ENCODE measurements at regions of chr3 and their contacts with region 1.

Region 1: GRCh38 chr3:188061133-188061532 is 92.8 kb upstream of the LPP start:
- DNase-seq: peak; percentile 85
- H3K4me3 Mint-ChIP-seq: peak overlapping the region; percentile 66
- H3K27ac Mint-ChIP-seq: peak overlapping the region; percentile 88
- H3K4me1 Mint-ChIP-seq: peaks cover 32% of the 10 kb centered on the region
- H3K27me3 Mint-ChIP-seq: no peaks in the 10 kb centered on the region

Region 2: GRCh38 chr3:186760141-186760813 is 1300.9 kb before region 1 on chr3:
- intact Hi-C with region 1: no loop called
- DNase-seq: no peak
- H3K4me3 Mint-ChIP-seq: no peak overlapping the region
- H3K27ac Mint-ChIP-seq: no peak overlapping the region
- H3K4me1 Mint-ChIP-seq: peaks cover 3% of the 10 kb centered on the region
- H3K27me3 Mint-ChIP-seq: peaks cover 3% of the 10 kb centered on the region

Region 3: GRCh38 chr3:187994221-187995042 is 66.7 kb before region 1 on chr3:
- intact Hi-C with region 1: loop called (anchors 1 kb)
- DNase-seq: peak; percentile 75
- H3K4me3 Mint-ChIP-seq: peak overlapping the region; percentile 47
- H3K27ac Mint-ChIP-seq: peak overlapping the region; percentile 76
- H3K4me1 Mint-ChIP-seq: peaks cover 71% of the 10 kb centered on the region
- H3K27me3 Mint-ChIP-seq: no peaks in the 10 kb centered on the region

Region 4: GRCh38 chr3:188123170-188123905 is 62.2 kb after region 1 on chr3:
- intact Hi-C with region 1: loop called (anchors 1 kb)
- DNase-seq: no peak
- H3K4me3 Mint-ChIP-seq: no peak overlapping the region
- H3K27ac Mint-ChIP-seq: peak overlapping the region; percentile 45
- H3K4me1 Mint-ChIP-seq: peaks cover 17% of the 10 kb centered on the region
- H3K27me3 Mint-ChIP-seq: peaks cover 5% of the 10 kb centered on the region

Region 5: DNA sequence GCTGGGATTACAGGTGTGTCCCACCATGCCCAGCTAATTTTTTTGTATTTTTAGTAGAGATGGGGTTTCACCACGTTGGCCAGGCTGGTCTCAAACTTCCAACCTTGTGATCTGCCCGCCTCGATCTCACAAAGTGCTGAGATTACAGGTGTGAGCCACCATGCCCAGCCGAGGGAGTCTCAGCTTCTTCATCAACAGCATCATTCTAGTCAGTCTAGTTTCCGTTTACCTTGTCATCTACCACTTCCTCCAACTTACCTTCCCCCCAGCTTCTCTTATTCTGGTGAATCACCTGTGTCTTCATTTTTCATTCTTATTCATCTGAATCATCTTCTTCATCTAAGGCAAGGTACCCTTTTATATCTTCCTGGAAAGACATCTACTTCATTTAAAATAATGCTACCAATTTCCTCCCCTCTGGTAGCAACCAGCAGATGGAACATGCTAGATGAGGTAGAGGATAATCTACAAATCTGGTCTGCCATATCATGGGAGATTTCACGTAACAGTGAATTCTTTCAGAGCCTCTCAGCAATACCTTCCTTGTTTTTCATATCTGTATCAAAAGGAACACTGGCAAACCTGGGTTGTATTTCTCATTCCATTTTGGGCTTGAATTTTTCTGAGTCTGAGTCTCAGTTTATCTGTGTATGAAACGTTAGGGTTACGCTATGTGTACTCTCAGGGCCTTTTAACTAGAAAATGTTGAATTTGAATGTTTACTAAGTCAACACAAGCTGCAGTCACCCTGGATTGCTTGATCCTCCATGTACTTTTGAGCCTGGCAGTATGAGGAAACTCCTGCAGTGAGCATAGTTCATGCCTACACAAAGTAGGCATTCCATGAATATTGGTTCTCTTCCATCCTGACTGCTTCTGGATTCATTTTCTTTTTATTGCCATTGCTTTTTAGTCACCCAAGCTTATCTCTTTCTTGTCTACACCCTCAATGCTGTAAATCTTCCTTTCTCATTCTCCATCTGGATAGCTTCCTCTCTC is 109.6 kb after region 1 on chr3:
- intact Hi-C with region 1: no loop called
- DNase-seq: peak; percentile 79
- H3K4me3 Mint-ChIP-seq: peak overlapping the region; percentile 4
- H3K27ac Mint-ChIP-seq: peak overlapping the region; percentile 85
- H3K4me1 Mint-ChIP-seq: peaks cover 39% of the 10 kb centered on the region
- H3K27me3 Mint-ChIP-seq: no peaks in the 10 kb centered on the region